ENCODE measurements at regions of chr5 and their contacts with region 1.

Region 1: GRCh38 chr5:140647042-140647341 is 438 bp downstream of the NDUFA2 start:
- DNase-seq: no peak
- ATAC-seq: peak; percentile 33
- H3K4me3 Mint-ChIP-seq: peak overlapping the region; percentile 96
- H3K27ac Mint-ChIP-seq: peak overlapping the region; percentile 98
- H3K4me1 Mint-ChIP-seq: peaks cover 33% of the 10 kb centered on the region
- H3K27me3 Mint-ChIP-seq: no peaks in the 10 kb centered on the region

Region 2: GRCh38 chr5:140401362-140402257 is 245.4 kb before region 1 on chr5 and contains the start of gene ANKHD1:
- CTCF ChIA-PET with region 1: no interaction called
- POLR2A ChIA-PET with region 1: interaction called, 14 read pairs
- DNase-seq: peak; percentile 99
- ATAC-seq: peak; percentile 88
- H3K4me3 Mint-ChIP-seq: no peak within 1 kb of the TSS
- H3K27ac Mint-ChIP-seq: no peak within 1 kb of the TSS
- H3K4me1 Mint-ChIP-seq: peaks cover 33% of the 10 kb centered on the region
- H3K27me3 Mint-ChIP-seq: no peaks in the 10 kb centered on the region
- total RNA-seq, gene ANKHD1: 108 to 112 TPM

Region 3: GRCh38 chr5:140547508-140548299 is 99.3 kb before region 1 on chr5 and contains the start of gene EIF4EBP3:
- CTCF ChIA-PET with region 1: interaction called, 7 read pairs
- POLR2A ChIA-PET with region 1: interaction called, 22 read pairs
- DNase-seq: peak; percentile 91
- ATAC-seq: peak; percentile 97
- H3K4me3 Mint-ChIP-seq: peak within 1 kb of the TSS; percentile 80
- H3K27ac Mint-ChIP-seq: peak within 1 kb of the TSS; percentile 95
- H3K4me1 Mint-ChIP-seq: peaks cover 42% of the 10 kb centered on the region
- H3K27me3 Mint-ChIP-seq: no peaks in the 10 kb centered on the region
- total RNA-seq, gene EIF4EBP3: 7.4 to 8.6 TPM

Region 4: DNA sequence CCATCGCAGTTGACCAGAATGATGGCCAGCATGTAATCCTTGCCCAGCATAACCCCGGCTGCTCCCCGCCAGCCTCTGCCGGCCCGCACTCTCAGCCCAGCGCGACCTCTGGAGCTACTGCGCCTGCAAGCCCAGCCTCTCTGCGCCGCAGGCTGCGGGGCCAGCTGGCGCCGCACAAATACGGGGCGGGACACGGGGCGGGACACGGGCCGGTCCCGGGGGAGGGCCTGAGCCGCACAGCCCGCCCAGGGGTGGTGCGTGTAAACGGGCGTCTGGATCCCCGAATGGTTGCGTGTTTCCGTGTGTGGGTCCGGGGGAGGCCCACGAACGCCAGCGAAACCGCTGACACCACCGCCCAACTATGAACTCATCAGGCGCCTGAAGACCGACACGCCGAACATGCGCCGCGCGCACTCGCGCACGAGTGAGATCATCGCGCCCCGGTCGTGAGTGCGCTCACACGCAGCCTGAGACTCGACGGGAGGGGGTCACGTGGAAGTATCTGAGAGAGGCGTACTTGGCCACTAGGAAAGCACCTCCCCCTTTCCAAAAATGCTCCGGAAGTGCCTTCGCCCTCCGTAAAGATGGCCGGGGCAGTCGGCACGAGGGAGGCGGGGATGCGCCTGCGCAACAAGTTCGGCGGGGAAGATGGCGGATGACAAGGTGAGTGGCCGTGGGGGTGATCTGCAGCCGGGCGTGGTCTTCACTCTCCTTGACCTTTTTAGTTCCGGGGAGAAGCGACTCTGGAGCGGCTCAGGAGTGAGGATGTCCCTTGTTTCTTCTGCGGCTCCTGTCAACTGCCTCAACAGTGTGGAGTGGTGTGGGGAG is 82.6 kb before region 1 on chr5 and contains the starts of genes APBB3 and SLC35A4:
- CTCF ChIA-PET with region 1: interaction called, 3 read pairs
- POLR2A ChIA-PET with region 1: interaction called, 21 read pairs
- DNase-seq: peak; percentile 99
- ATAC-seq: peak; percentile 92
- H3K4me3 Mint-ChIP-seq: peak within 1 kb of the TSS; percentile 89
- H3K27ac Mint-ChIP-seq: peak within 1 kb of the TSS; percentile 93
- H3K4me1 Mint-ChIP-seq: peaks cover 54% of the 10 kb centered on the region
- H3K27me3 Mint-ChIP-seq: no peaks in the 10 kb centered on the region
- total RNA-seq, gene APBB3: 24.1 to 25.0 TPM
- total RNA-seq, gene SLC35A4: 88.9 to 98.2 TPM

Region 5: GRCh38 chr5:140664359-140665119 is 17.5 kb after region 1 on chr5 and contains the start of gene WDR55:
- CTCF ChIA-PET with region 1: interaction called, 13 read pairs
- POLR2A ChIA-PET with region 1: interaction called, 44 read pairs
- DNase-seq: peak; percentile 97
- ATAC-seq: peak; percentile 93
- H3K4me3 Mint-ChIP-seq: peak within 1 kb of the TSS; percentile 98
- H3K27ac Mint-ChIP-seq: peak within 1 kb of the TSS; percentile 96
- H3K4me1 Mint-ChIP-seq: peaks cover 35% of the 10 kb centered on the region
- H3K27me3 Mint-ChIP-seq: no peaks in the 10 kb centered on the region
- total RNA-seq, gene WDR55: 40.1 to 41.1 TPM

Region 6: GRCh38 chr5:140690941-140691924 is 44.2 kb after region 1 on chr5 and contains the starts of genes HARS1 and HARS2:
- CTCF ChIA-PET with region 1: no interaction called
- POLR2A ChIA-PET with region 1: interaction called, 20 read pairs
- DNase-seq: peak; percentile 88
- ATAC-seq: peak; percentile 96
- H3K4me3 Mint-ChIP-seq: peak within 1 kb of the TSS; percentile 97
- H3K27ac Mint-ChIP-seq: peak within 1 kb of the TSS; percentile 97
- H3K4me1 Mint-ChIP-seq: peaks cover 48% of the 10 kb centered on the region
- H3K27me3 Mint-ChIP-seq: no peaks in the 10 kb centered on the region
- total RNA-seq, gene HARS1: 81.6 to 87.6 TPM
- total RNA-seq, gene HARS2: 27.3 to 29.0 TPM

Region 7: GRCh38 chr5:140710899-140711552 is 64.0 kb after region 1 on chr5:
- CTCF ChIA-PET with region 1: interaction called, 5 read pairs
- POLR2A ChIA-PET with region 1: interaction called, 16 read pairs
- DNase-seq: peak; percentile 95
- ATAC-seq: peak; percentile 94
- H3K4me3 Mint-ChIP-seq: peak overlapping the region; percentile 96
- H3K27ac Mint-ChIP-seq: peak overlapping the region; percentile 93
- H3K4me1 Mint-ChIP-seq: peaks cover 18% of the 10 kb centered on the region
- H3K27me3 Mint-ChIP-seq: peaks cover 5% of the 10 kb centered on the region